ENCODE measurements at regions of chr3 and their contacts with region 1.

Region 1: DNA sequence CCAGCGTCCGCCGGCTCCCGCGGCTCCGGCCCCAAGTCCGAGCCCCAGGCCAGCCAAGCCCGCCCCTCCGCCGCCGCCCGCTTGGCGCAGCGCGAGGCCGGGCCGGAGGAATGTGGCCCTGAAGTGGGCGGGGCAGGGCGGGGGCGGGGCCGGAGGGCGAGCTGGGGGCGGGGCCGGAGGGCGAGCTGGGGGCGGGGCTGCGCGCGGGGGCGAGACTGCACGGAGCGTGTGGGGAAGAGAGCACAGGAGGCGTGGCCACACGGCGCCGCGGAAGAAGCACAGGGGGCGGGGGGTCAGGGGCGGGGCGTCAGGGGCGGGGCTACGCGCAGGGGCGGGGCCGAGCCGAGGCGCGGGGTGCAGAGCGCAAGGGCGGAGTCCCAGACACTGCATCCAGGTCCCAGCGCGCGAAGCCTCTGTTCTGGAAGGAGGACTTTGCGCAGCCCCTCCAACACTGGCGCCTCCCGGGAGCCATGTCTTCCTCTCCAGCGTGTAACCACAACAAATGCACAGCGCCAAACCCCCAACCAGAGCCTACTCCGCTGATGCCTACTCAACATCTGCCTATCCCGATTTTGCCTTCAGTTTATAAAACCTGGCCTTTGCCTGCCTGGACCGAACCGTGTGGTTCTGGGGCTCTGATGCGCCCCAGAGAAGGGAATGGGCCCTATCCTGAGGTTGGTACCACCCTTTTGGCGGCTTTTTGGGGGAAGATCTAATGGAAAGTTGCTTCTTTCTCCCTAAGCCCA is 105.5 kb downstream of the IQSEC1 start:
- DNase-seq: peak; percentile 95
- ATAC-seq: peak; percentile 86
- H3K4me3 Mint-ChIP-seq: peak overlapping the region; percentile 66
- H3K27ac Mint-ChIP-seq: peak overlapping the region; percentile 52
- H3K4me1 Mint-ChIP-seq: peaks cover 59% of the 10 kb centered on the region
- H3K27me3 Mint-ChIP-seq: no peaks in the 10 kb centered on the region

Region 2: GRCh38 chr3:11944052-11944673 is 1023.6 kb before region 1 on chr3:
- CTCF ChIA-PET with region 1: no interaction called
- POLR2A ChIA-PET with region 1: no interaction called
- intact Hi-C with region 1: no loop called
- DNase-seq: no peak
- ATAC-seq: no peak
- H3K4me3 Mint-ChIP-seq: no peak overlapping the region
- H3K27ac Mint-ChIP-seq: no peak overlapping the region
- H3K4me1 Mint-ChIP-seq: no peaks in the 10 kb centered on the region
- H3K27me3 Mint-ChIP-seq: peaks cover 5% of the 10 kb centered on the region

Region 3: GRCh38 chr3:12810013-12810780 is 157.6 kb before region 1 on chr3:
- CTCF ChIA-PET with region 1: interaction called, 4 read pairs
- POLR2A ChIA-PET with region 1: no interaction called
- intact Hi-C with region 1: loop called in 1 of 2 experiments (anchors 1 kb)
- DNase-seq: peak; percentile 96
- ATAC-seq: peak; percentile 100
- H3K4me3 Mint-ChIP-seq: peak overlapping the region; percentile 50
- H3K27ac Mint-ChIP-seq: no peak overlapping the region
- H3K4me1 Mint-ChIP-seq: peaks cover 6% of the 10 kb centered on the region
- H3K27me3 Mint-ChIP-seq: no peaks in the 10 kb centered on the region

Region 4: DNA sequence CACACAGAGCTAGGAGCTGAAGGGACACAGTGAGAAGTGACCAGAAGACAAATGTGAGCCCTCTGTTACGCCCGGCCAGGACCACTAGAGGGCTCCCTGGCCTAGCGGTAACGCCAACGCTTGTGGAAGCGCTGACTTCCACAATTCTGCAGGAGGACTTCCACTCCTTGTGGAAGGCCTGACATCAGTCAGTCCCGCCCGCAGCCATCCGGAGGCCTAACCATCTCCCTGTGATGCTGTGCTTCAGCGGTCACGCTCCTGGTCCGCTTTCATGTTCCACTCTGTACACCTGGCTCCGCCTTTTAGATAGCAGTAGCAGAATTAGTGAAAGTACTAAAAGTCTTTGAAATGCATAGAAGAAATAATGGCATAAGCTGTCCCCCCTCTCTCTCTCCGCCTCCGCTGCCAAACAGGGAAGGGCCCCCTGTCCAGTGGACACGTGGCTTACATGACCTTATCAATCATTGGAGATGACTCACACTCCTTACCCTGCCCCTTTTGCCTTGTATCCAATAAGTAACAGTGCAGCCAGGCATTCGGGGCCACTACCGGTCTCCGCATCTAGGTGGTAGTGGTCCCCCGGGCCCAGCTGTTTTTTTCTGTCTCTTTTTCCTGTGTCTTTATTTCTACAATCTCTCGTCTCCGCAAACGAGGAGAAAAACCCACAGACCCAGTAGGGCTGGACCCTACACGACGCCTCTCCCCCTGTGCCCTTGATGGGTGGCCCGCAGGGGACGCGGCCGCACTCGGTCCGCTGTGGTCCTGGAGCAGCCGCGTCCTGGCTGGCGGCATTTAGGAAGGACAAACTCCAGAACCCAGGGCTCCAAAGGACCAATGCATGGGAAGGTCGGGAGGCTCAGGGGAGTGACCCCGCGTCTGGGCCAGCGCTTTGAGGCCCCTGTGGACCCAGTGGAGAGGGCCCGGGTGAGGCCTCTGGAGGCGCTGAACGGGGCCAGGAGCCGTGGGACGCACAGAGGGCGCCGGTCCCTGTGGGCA is 99.4 kb before region 1 on chr3:
- CTCF ChIA-PET with region 1: no interaction called
- POLR2A ChIA-PET with region 1: no interaction called
- intact Hi-C with region 1: loop called in 1 of 2 experiments (anchors 1 kb)
- DNase-seq: peak; percentile 79
- ATAC-seq: peak; percentile 88
- H3K4me3 Mint-ChIP-seq: peak overlapping the region; percentile 72
- H3K27ac Mint-ChIP-seq: peak overlapping the region; percentile 71
- H3K4me1 Mint-ChIP-seq: peaks cover 9% of the 10 kb centered on the region
- H3K27me3 Mint-ChIP-seq: peaks cover 8% of the 10 kb centered on the region

Region 5: GRCh38 chr3:12984023-12984823 is 16.4 kb after region 1 on chr3:
- CTCF ChIA-PET with region 1: interaction called, 23 read pairs
- POLR2A ChIA-PET with region 1: no interaction called
- intact Hi-C with region 1: no loop called
- DNase-seq: peak; percentile 78
- ATAC-seq: peak; percentile 90
- H3K4me3 Mint-ChIP-seq: no peak overlapping the region
- H3K27ac Mint-ChIP-seq: peak overlapping the region; percentile 57
- H3K4me1 Mint-ChIP-seq: peaks cover 30% of the 10 kb centered on the region
- H3K27me3 Mint-ChIP-seq: no peaks in the 10 kb centered on the region

Region 6: DNA sequence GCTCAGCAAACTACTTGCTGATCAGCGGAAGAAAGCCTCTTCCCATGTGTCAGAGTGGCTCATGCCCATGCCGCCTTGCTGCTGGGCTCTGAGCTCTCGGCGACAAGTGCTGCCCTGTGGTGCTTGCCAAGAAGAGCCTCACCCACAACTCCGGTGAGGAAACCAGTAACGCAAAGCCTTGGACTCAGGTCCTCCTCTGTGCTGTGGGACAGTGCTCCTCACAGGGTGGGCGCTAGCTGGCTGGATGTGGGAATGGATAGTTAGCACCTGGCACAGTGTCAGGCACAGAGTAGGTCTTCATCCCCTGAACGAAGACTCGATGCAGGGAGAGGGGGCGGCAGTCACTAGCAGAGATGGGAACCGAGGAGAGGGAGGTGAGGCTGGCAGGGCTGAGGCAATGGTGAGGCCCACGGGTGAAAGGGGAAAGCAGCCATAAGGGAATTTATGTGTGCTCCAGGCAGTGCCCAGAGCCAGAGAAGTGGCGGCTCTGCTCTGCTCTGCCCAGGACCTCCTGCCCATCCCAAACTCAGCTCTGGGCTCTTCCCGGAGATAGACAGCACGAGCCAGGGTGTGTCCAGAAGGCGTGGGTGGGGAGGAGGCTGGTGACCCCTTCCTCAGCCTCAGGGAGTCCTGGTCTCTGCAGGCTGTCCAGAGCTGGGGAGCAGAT is 49.7 kb after region 1 on chr3:
- CTCF ChIA-PET with region 1: interaction called, 4 read pairs
- POLR2A ChIA-PET with region 1: interaction called, 3 read pairs
- intact Hi-C with region 1: loop called (anchors 1 to 5 kb)
- DNase-seq: no peak
- ATAC-seq: no peak
- H3K4me3 Mint-ChIP-seq: no peak overlapping the region
- H3K27ac Mint-ChIP-seq: peak overlapping the region; percentile 98
- H3K4me1 Mint-ChIP-seq: peaks cover 38% of the 10 kb centered on the region
- H3K27me3 Mint-ChIP-seq: no peaks in the 10 kb centered on the region

Region 7: GRCh38 chr3:13245615-13245978 is 277.8 kb after region 1 on chr3:
- CTCF ChIA-PET with region 1: no interaction called
- POLR2A ChIA-PET with region 1: no interaction called
- intact Hi-C with region 1: no loop called
- DNase-seq: no peak
- ATAC-seq: no peak
- H3K4me3 Mint-ChIP-seq: no peak overlapping the region
- H3K27ac Mint-ChIP-seq: no peak overlapping the region
- H3K4me1 Mint-ChIP-seq: no peaks in the 10 kb centered on the region
- H3K27me3 Mint-ChIP-seq: no peaks in the 10 kb centered on the region

Measured in activated CD4-positive, alpha-beta T cell treated with anti-CD3 and anti-CD28 coated beads for 36 hours (primary cell).